ENCODE measurements at regions of chr6 and their contacts with region 1.

Region 1: DNA sequence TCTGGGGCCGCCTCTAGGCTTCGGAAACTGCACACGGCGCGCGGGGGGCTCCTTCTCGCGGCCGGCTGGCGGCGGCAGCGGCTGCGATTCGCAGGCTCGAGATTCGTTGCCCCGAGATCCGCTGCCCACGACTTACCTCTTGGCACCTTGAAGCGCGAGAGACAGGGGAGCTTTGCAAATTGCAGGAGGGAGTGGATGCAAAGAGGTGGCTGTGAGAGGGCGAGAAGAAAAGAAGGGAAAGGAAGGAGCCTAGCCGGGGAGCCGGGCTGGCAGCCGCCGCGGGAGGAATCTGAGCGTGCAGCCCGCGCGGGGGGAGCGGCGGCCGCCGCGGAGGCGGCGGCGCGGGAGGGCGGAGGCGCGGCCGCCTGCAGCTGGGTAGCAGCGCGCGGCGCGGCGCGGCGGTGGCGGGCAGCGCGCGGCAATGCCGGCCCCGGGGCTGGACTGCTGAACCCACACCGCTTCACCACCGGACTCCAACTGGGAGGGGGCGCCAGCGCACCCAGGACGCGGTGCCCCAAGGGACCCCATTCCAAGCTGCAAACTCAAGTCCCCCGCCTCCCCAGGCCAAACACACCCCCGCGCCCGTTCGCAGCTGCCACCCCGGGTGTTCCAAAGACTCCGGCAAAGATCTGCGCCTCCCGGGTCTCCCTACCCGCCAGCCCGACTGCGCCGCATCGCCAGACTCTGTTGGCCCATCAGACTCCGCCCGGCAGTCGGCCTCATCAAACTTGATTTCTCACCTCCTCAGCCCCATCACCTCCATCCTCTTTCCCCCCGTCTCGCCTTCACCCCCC is 44.2 kb upstream of the SUPT3H start:
- DNase-seq: peak; percentile 78
- H3K4me3 Mint-ChIP-seq: peak overlapping the region; percentile 91
- H3K27ac Mint-ChIP-seq: peak overlapping the region; percentile 97
- H3K4me1 Mint-ChIP-seq: peaks cover 41% of the 10 kb centered on the region
- H3K27me3 Mint-ChIP-seq: no peaks in the 10 kb centered on the region

Region 2: GRCh38 chr6:44630125-44631028 is 791.5 kb before region 1 on chr6:
- CTCF ChIA-PET with region 1: interaction called, 7 read pairs
- POLR2A ChIA-PET with region 1: no interaction called
- intact Hi-C with region 1: loop called (anchors 1 kb)
- DNase-seq: peak; percentile 66
- H3K4me3 Mint-ChIP-seq: no peak overlapping the region
- H3K27ac Mint-ChIP-seq: no peak overlapping the region
- H3K4me1 Mint-ChIP-seq: peaks cover 15% of the 10 kb centered on the region
- H3K27me3 Mint-ChIP-seq: no peaks in the 10 kb centered on the region

Region 3: DNA sequence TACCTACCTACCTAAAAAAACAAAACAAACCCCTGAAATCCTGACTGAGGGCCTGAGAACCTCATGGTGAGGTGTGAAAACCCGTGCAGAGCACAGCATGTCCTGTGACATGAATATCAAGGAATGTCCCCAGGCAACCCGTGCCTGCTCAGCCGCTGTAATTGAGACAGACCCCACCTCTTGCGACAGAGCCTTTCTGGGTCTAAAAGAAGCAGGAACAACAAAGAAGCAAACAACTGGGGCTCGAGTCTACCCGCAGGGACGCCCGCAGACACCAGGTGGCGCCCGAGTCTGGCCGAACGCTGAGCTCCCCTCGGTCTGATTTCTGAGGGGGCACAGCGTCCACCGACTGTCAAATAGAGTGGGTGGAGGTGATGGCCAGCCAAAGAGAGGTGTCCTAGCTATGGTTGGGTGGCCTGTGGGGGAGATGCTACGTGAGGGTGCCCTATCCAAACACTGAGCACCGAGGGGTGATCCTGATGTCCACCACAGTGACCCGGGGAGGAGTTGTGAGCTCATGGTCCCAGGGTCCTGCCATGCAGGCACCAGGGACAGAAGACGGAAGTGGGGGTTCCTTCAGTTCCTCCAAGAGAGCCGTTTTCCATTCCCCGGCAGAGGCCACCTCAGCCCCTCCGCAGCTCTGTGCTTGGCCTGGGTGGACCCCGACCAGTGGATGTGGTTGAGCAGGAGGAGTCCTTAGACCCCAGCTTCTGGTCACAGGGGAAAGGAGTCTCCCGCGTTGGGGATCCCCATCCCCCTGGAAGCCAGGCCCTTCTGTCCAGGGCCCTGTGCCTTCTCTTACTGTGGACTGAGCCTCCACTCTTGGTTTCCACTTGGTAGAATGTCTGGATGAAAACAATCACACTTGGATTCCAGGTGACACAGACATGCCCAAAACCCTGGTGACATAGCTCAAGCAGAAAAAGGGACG is 766.2 kb before region 1 on chr6:
- CTCF ChIA-PET with region 1: interaction called, 11 read pairs
- POLR2A ChIA-PET with region 1: interaction called, 3 read pairs
- intact Hi-C with region 1: loop called (anchors 2 kb)
- DNase-seq: peak; percentile 85
- H3K4me3 Mint-ChIP-seq: peak overlapping the region; percentile 24
- H3K27ac Mint-ChIP-seq: peak overlapping the region; percentile 76
- H3K4me1 Mint-ChIP-seq: peaks cover 9% of the 10 kb centered on the region
- H3K27me3 Mint-ChIP-seq: no peaks in the 10 kb centered on the region

Region 4: DNA sequence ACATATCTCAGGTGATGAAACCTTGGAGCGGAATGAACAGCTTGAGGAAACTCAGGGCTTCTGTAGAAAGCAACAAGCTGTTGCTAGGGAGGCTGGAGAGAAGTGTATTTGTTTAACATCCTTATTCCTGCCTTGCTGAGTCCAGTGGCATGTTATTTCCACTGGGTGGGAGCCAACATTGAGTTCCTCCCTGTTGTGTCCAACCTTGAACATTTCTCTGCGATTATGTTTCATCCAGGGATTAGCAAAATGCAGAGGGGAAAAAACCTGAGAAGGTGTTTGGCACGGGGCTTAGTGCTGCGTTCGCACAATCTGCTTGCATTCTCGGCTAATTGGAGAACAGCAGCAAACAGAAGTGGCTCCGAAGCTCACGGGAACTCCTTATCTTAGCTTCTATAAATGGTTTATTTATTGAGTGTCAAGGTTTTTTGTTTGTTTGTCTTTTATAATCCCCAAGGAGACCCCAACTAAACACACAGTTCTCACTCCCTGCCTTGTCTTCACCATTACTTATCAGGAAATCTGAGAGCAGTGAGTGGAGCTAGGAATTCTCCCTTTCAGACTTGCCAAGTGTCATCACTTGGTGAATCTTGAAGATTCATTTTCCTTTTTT is 621.6 kb before region 1 on chr6:
- CTCF ChIA-PET with region 1: no interaction called
- POLR2A ChIA-PET with region 1: no interaction called
- intact Hi-C with region 1: no loop called
- DNase-seq: no peak
- H3K4me3 Mint-ChIP-seq: no peak overlapping the region
- H3K27ac Mint-ChIP-seq: no peak overlapping the region
- H3K4me1 Mint-ChIP-seq: no peaks in the 10 kb centered on the region
- H3K27me3 Mint-ChIP-seq: peaks cover 2% of the 10 kb centered on the region

Region 5: GRCh38 chr6:45163952-45164766 is 257.7 kb before region 1 on chr6:
- CTCF ChIA-PET with region 1: no interaction called
- POLR2A ChIA-PET with region 1: interaction called, 3 read pairs
- intact Hi-C with region 1: loop called (anchors 5 kb)
- DNase-seq: peak; percentile 60
- H3K4me3 Mint-ChIP-seq: peak overlapping the region; percentile 46
- H3K27ac Mint-ChIP-seq: peak overlapping the region; percentile 74
- H3K4me1 Mint-ChIP-seq: peaks cover 42% of the 10 kb centered on the region
- H3K27me3 Mint-ChIP-seq: no peaks in the 10 kb centered on the region

Region 6: DNA sequence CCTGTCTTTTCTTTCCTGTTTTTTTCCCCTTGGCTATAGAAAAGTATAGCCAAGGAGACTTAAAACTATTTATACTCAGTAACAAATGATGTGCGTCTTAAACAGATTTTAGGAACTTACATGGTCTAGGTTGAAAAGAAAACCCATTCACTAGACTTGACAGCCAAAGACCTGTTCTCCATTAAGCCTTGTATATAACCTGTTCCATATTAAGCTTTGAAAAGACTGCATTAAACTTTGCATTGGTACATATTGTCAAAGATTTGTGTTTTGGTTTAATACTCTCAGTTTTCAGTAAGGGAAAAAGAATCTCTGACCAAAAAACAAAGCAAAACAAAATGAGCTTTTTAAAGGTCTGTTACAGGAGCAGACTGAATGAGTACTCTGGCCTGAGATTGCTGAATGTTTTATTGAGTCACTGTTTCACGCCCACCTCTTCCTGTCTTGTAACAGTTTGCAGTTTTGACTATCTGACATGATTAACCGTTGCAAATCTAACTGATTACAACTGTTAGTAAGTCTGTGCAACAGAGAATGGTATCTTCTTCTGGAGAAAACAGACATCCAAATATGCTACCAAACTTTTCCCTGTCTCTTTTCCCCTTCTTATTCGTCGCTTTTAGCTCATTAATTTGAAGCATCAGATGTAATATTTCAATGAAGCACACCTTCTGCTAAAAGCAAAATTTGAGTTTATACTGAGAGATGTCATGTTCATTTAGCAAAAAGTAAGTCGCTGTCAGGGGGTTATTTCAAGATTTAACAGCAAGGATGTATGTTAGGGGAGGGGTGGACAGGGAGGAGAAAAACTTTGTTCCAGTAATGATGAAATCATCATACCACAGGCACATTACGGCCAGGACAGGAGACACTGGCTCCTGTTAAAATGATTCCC is 14.9 kb after region 1 on chr6:
- CTCF ChIA-PET with region 1: interaction called, 4 read pairs
- POLR2A ChIA-PET with region 1: interaction called, 34 read pairs
- intact Hi-C with region 1: loop called (anchors 1 kb)
- DNase-seq: peak; percentile 67
- H3K4me3 Mint-ChIP-seq: peak overlapping the region; percentile 65
- H3K27ac Mint-ChIP-seq: peak overlapping the region; percentile 92
- H3K4me1 Mint-ChIP-seq: peaks cover 85% of the 10 kb centered on the region
- H3K27me3 Mint-ChIP-seq: no peaks in the 10 kb centered on the region

Region 7: DNA sequence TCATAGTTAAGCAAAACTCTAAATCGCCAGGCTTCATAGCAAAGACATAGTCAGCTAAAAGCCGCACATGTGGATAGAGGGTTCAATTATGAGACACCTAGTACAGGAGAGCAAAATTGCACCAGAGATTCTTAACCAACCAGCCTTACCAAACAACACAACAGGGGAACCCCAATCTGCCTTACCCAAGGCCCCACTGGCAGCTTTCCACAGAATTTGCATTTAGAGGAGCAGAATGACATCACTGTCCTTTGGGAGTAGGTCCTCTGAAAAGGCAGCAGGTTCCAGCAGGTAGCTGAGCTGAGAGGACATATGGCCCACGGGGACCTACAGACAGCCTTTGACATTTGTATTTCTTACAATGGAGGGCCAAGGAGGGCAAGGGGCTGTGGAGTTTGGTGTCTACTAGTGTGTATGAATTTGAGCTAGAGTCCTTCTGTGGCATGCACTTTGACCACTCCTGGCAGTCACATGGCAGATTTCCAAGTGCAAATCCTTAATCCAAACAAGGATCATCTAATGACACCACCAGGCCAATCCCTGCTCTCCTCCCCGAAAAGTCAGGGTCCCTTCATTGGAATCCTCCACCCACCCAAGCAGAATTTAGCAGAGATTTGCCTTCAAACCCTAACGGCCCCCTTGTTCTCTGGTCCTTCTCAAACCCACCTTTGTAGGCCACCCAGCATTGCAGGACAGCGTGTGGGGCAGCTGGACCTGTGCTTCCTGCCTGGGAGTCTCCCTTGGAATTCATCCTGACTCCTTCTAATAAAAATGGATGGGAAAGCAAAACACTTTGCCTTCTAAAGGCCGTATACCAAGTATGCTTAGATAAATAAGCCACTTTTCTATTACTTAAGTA is 127.0 kb after region 1 on chr6:
- CTCF ChIA-PET with region 1: no interaction called
- POLR2A ChIA-PET with region 1: no interaction called
- intact Hi-C with region 1: no loop called
- DNase-seq: peak; percentile 44
- H3K4me3 Mint-ChIP-seq: no peak overlapping the region
- H3K27ac Mint-ChIP-seq: no peak overlapping the region
- H3K4me1 Mint-ChIP-seq: peaks cover 21% of the 10 kb centered on the region
- H3K27me3 Mint-ChIP-seq: no peaks in the 10 kb centered on the region

Region 8: DNA sequence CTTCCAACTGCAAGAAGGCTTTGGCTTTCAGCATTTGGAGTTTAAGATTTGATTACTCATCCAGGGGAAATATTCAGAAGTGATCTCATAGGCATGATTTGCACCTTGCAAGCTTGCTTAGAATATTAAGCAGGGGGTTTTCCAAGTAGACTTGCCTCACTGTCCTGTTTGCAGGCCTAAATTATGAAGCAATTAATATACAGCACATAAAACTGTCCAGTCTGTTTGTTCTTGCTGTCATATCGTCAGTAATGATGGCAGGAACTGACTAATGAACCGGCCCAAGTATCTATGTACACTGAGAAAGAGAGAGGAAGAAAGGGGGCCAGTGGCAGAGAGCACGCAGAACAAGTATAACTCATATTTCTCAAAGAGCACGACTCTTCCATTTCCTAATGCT is 168.3 kb after region 1 on chr6:
- CTCF ChIA-PET with region 1: interaction called, 3 read pairs
- POLR2A ChIA-PET with region 1: interaction called, 6 read pairs
- intact Hi-C with region 1: loop called (anchors 2 kb)
- DNase-seq: no peak
- H3K4me3 Mint-ChIP-seq: no peak overlapping the region
- H3K27ac Mint-ChIP-seq: peak overlapping the region; percentile 53
- H3K4me1 Mint-ChIP-seq: peaks cover 94% of the 10 kb centered on the region
- H3K27me3 Mint-ChIP-seq: no peaks in the 10 kb centered on the region

Region 9: GRCh38 chr6:45830441-45831139 is 408.7 kb after region 1 on chr6:
- CTCF ChIA-PET with region 1: no interaction called
- POLR2A ChIA-PET with region 1: interaction called, 5 read pairs
- intact Hi-C with region 1: loop called (anchors 2 kb)
- DNase-seq: peak; percentile 88
- H3K4me3 Mint-ChIP-seq: peak overlapping the region; percentile 75
- H3K27ac Mint-ChIP-seq: peak overlapping the region; percentile 95
- H3K4me1 Mint-ChIP-seq: peaks cover 59% of the 10 kb centered on the region
- H3K27me3 Mint-ChIP-seq: peaks cover 2% of the 10 kb centered on the region